ENCODE measurements at regions of chr4 and their contacts with region 1.

Region 1: GRCh38 chr4:137065311-137065710 is 467.0 kb downstream of the PCDH18 start:
- DNase-seq: no peak
- H3K4me3 ChIP-seq: no peak overlapping the region
- H3K4me3 Mint-ChIP-seq: no peak overlapping the region
- H3K27ac ChIP-seq: no peak overlapping the region
- H3K27ac Mint-ChIP-seq: no peak overlapping the region
- H3K4me1 ChIP-seq: no peaks in the 10 kb centered on the region
- H3K4me1 Mint-ChIP-seq: no peaks in the 10 kb centered on the region
- H3K27me3 ChIP-seq: no peaks in the 10 kb centered on the region
- H3K27me3 Mint-ChIP-seq: no peaks in the 10 kb centered on the region

Region 2: GRCh38 chr4:137083571-137084135 is 18.3 kb after region 1 on chr4:
- CTCF ChIA-PET with region 1: no interaction called
- POLR2A ChIA-PET with region 1: no interaction called
- intact Hi-C with region 1: no loop called
- DNase-seq: no peak
- H3K4me3 ChIP-seq: no peak overlapping the region
- H3K4me3 Mint-ChIP-seq: no peak overlapping the region
- H3K27ac ChIP-seq: no peak overlapping the region
- H3K27ac Mint-ChIP-seq: no peak overlapping the region
- H3K4me1 ChIP-seq: no peaks in the 10 kb centered on the region
- H3K4me1 Mint-ChIP-seq: no peaks in the 10 kb centered on the region
- H3K27me3 ChIP-seq: no peaks in the 10 kb centered on the region
- H3K27me3 Mint-ChIP-seq: no peaks in the 10 kb centered on the region

Region 3: GRCh38 chr4:137129441-137129840 is 64.1 kb after region 1 on chr4:
- CTCF ChIA-PET with region 1: no interaction called
- POLR2A ChIA-PET with region 1: no interaction called
- intact Hi-C with region 1: loop called (anchors 2 kb)
- DNase-seq: no peak
- H3K4me3 ChIP-seq: no peak overlapping the region
- H3K4me3 Mint-ChIP-seq: no peak overlapping the region
- H3K27ac ChIP-seq: no peak overlapping the region
- H3K27ac Mint-ChIP-seq: no peak overlapping the region
- H3K4me1 ChIP-seq: no peaks in the 10 kb centered on the region
- H3K4me1 Mint-ChIP-seq: no peaks in the 10 kb centered on the region
- H3K27me3 ChIP-seq: no peaks in the 10 kb centered on the region
- H3K27me3 Mint-ChIP-seq: no peaks in the 10 kb centered on the region

Measured in CD4-positive, alpha-beta memory T cell (primary cell).